ENCODE measurements at regions of chr3 and their contacts with region 1.

Region 1: DNA sequence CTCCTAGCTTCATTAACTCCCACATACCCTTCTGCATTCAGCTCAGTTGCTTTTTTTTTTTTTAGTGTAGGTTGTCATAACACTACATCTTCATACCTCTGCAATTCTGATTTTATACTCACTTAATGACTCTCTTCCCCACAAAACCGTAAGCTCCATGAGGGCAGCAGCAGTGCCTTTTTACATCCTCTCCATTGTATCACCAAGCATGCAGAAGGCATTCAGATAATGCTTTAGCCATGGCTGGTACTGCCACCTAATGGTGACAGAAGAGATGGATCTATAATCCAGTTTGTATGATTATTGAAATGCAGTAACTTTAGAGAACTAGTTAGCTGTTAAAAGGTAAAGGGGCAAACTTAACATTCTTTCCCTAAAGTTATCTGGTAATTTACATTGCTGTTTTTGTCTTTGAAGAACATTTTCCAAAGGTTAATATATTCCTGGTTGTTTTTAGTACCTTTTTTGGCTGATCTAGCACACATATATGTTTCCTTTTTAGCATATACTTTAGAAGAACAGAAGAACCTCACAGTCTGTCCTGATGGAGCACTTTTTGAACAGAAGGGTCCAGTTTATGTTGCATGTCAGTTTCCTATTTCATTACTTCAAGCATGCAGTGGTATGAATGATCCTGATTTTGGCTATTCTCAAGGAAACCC is 36.8 kb downstream of the ATP1B3 start:
- DNase-seq: peak; percentile 72
- H3K4me3 Mint-ChIP-seq: no peak overlapping the region
- H3K27ac Mint-ChIP-seq: no peak overlapping the region
- H3K4me1 Mint-ChIP-seq: peaks cover 2% of the 10 kb centered on the region
- H3K27me3 Mint-ChIP-seq: no peaks in the 10 kb centered on the region

Region 2: GRCh38 chr3:141575879-141576743 is 337.2 kb before region 1 on chr3:
- CTCF ChIA-PET with region 1: interaction called, 3 read pairs
- intact Hi-C with region 1: loop called (anchors 1 kb)
- DNase-seq: no peak
- H3K4me3 Mint-ChIP-seq: no peak overlapping the region
- H3K27ac Mint-ChIP-seq: peak overlapping the region; percentile 63
- H3K4me1 Mint-ChIP-seq: peaks cover 14% of the 10 kb centered on the region
- H3K27me3 Mint-ChIP-seq: no peaks in the 10 kb centered on the region

Region 3: DNA sequence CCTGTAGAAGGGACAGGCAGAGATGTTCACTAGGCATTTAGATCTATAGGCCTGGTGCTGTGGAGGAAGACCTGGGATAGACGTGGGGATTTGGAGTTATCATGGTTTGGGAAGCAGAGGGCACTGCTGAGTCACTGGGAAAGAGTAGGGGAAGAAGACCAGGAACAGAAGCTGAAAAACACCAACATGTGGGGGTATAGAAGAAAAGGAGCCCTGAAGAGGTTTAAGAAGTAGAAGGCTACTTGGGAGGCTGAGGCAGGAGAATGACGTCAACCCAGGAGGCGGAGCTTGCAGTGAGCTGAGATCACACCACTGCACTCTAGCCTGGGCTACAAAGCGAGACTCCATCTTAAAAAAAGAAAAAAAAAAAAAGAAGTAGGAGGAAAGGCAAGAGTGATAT is 130.8 kb before region 1 on chr3:
- CTCF ChIA-PET with region 1: interaction called, 4 read pairs
- intact Hi-C with region 1: loop called (anchors 1 kb)
- DNase-seq: peak; percentile 20
- H3K4me3 Mint-ChIP-seq: no peak overlapping the region
- H3K27ac Mint-ChIP-seq: no peak overlapping the region
- H3K4me1 Mint-ChIP-seq: no peaks in the 10 kb centered on the region
- H3K27me3 Mint-ChIP-seq: no peaks in the 10 kb centered on the region

Region 4: DNA sequence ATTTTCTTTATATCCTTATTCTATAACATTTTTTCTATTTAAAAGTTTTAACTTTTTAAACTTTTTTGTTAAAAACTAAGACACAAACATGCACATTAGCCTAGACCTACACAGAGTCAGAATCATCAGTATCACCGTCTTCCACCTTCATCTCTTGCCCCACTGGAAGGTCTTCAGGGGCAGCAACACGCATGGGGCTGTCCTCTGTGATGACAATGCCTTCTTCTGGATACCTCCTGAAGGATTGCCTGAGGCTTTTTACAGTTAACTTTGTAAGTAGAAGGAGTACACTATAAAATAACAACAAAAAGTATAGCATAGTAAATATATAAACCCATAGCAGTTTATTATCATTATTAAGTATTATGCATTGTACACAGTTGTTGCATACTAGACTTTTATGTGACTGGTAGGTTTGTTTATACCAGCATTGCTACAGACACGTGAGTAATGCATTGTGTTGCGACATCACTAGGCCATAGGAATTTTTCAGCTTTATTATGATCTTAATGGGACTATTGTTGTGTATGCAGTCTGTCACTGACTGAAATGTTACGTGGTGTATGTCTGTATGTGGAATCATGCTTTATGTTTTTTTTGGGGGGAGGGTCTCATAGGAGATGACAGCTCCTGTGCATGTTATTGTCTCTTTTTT is 18.6 kb before region 1 on chr3:
- CTCF ChIA-PET with region 1: interaction called, 11 read pairs
- intact Hi-C with region 1: no loop called
- DNase-seq: no peak
- H3K4me3 Mint-ChIP-seq: no peak overlapping the region
- H3K27ac Mint-ChIP-seq: no peak overlapping the region
- H3K4me1 Mint-ChIP-seq: peaks cover 36% of the 10 kb centered on the region
- H3K27me3 Mint-ChIP-seq: no peaks in the 10 kb centered on the region

Region 5: GRCh38 chr3:142148792-142149672 is 235.8 kb after region 1 on chr3 and contains the start of gene TFDP2:
- CTCF ChIA-PET with region 1: no interaction called
- intact Hi-C with region 1: no loop called
- DNase-seq: peak; percentile 89
- H3K4me3 Mint-ChIP-seq: peak within 1 kb of the TSS; percentile 84
- H3K27ac Mint-ChIP-seq: no peak within 1 kb of the TSS
- H3K4me1 Mint-ChIP-seq: peaks cover 24% of the 10 kb centered on the region
- H3K27me3 Mint-ChIP-seq: no peaks in the 10 kb centered on the region
- total RNA-seq, gene TFDP2: 23.0 to 25.0 TPM

Region 6: DNA sequence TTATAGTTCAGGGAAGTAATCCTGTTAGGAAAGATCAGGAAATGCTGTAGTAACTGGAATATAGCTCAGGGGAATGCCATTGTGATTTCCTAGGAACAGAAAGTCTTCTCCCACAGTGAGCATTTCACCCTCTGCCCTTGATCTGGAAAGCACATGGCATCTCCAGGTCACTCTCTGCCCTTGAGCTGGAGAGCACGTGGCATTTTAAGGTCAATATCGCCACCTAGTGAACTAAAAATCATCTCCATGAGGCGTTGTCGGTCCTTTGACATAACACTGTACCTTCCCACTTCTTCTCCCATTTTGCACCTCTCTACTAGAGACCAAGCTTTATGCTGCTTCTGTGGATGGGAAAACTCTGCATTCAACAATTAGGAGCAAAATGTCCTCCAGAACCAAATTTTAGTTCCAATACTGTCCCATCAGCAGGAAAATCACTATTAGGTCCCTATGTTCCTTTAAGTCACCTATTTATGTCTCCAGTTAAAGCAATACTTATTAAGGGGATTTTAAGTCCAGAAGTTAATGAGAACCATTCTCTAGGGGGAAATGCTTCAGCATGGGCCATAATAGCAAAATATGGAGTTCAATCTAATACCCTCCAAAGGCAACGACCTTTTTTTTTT is 366.8 kb after region 1 on chr3:
- CTCF ChIA-PET with region 1: no interaction called
- intact Hi-C with region 1: no loop called
- DNase-seq: peak; percentile 54
- H3K4me3 Mint-ChIP-seq: no peak overlapping the region
- H3K27ac Mint-ChIP-seq: no peak overlapping the region
- H3K4me1 Mint-ChIP-seq: peaks cover 2% of the 10 kb centered on the region
- H3K27me3 Mint-ChIP-seq: no peaks in the 10 kb centered on the region

Measured in activated naive CD4-positive, alpha-beta T cell treated with anti-CD3 and anti-CD28 coated beads for 36 hours (primary cell).